ENCODE measurements at regions of chrX and their contacts with region 1.

Region 1: GRCh38 chrX:81201671-81202455 is at the starts of genes HMGN5 and SH3BGRL:
- DNase-seq: peak; percentile 47 to 86 (median 60)
- ATAC-seq: peak; percentile 94
- H3K4me3 ChIP-seq: peak within 1 kb of the TSS; percentile 75
- H3K4me3 Mint-ChIP-seq: peak within 1 kb of the TSS; percentile 100
- H3K27ac ChIP-seq: peak within 1 kb of the TSS; percentile 69 to 73
- H3K27ac Mint-ChIP-seq: peak within 1 kb of the TSS; percentile 97
- H3K4me1 ChIP-seq: peaks cover 3% of the 10 kb centered on the region
- H3K4me1 Mint-ChIP-seq: peaks cover 58% of the 10 kb centered on the region
- H3K27me3 ChIP-seq: no peaks in the 10 kb centered on the region
- H3K27me3 Mint-ChIP-seq: no peaks in the 10 kb centered on the region
- CTCF ChIP-seq: no peak
- total RNA-seq, gene HMGN5: 1.0 to 1.5 TPM
- total RNA-seq, gene SH3BGRL: 41.7 to 41.8 TPM

Region 2: GRCh38 chrX:80808160-80808735 is 393.6 kb before region 1 on chrX:
- CTCF ChIA-PET with region 1: interaction called, 3 read pairs
- POLR2A ChIA-PET with region 1: interaction called, 28 read pairs
- intact Hi-C with region 1: loop called (anchors 5 to 10 kb)
- DNase-seq: peak; percentile 51 to 91 (median 71)
- ATAC-seq: peak; percentile 59
- H3K4me3 ChIP-seq: peak overlapping the region; percentile 74
- H3K4me3 Mint-ChIP-seq: peak overlapping the region; percentile 94
- H3K27ac ChIP-seq: peak overlapping the region; percentile 87 to 90
- H3K27ac Mint-ChIP-seq: peak overlapping the region; percentile 97
- H3K4me1 ChIP-seq: peaks cover 6% of the 10 kb centered on the region
- H3K4me1 Mint-ChIP-seq: peaks cover 38% of the 10 kb centered on the region
- H3K27me3 ChIP-seq: no peaks in the 10 kb centered on the region
- H3K27me3 Mint-ChIP-seq: peaks cover 10% of the 10 kb centered on the region
- CTCF ChIP-seq: no peak

Region 3: DNA sequence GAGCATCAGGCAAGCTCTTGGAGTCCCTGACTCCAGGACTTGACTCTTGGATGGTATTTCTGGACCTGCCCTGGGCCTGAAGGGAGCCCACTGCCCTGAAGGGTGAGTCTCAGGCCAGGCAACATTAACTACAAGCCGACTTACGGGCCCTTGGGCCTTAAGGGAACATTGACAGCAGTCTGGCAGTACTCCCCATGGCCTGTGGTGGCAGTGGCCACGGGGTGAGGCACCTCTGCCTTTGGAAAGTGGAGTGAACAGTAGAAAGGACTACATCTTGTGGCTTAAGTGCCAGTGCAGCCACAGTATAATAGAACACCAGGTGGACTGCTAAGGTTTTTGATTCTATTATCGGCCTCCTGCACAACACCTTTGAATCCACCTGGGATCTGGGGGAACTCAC is 36.3 kb after region 1 on chrX:
- CTCF ChIA-PET with region 1: no interaction called
- POLR2A ChIA-PET with region 1: no interaction called
- intact Hi-C with region 1: no loop called
- DNase-seq: no peak
- ATAC-seq: no peak
- H3K4me3 ChIP-seq: no peak overlapping the region
- H3K4me3 Mint-ChIP-seq: no peak overlapping the region
- H3K27ac ChIP-seq: no peak overlapping the region
- H3K27ac Mint-ChIP-seq: no peak overlapping the region
- H3K4me1 ChIP-seq: no peaks in the 10 kb centered on the region
- H3K4me1 Mint-ChIP-seq: peaks cover 12% of the 10 kb centered on the region
- H3K27me3 ChIP-seq: no peaks in the 10 kb centered on the region
- H3K27me3 Mint-ChIP-seq: no peaks in the 10 kb centered on the region
- CTCF ChIP-seq: no peak